ENCODE measurements at regions of chr12 and their contacts with region 1.

Region 1: GRCh38 chr12:6825398-6826124 is 2.6 kb upstream of the P3H3 start:
- DNase-seq: peak; percentile 94
- CTCF ChIP-seq: peak; percentile 91

Region 2: GRCh38 chr12:6752921-6753771 is 72.4 kb before region 1 on chr12 and contains the start of gene MLF2:
- in situ Hi-C with region 1: loop called (anchors 10 kb)
- DNase-seq: peak; percentile 99
- CTCF ChIP-seq: peak; percentile 90

Region 3: GRCh38 chr12:7542813-7543498 is 717.4 kb after region 1 on chr12:
- in situ Hi-C with region 1: no loop called
- DNase-seq: no peak
- CTCF ChIP-seq: no peak